Caco-2 (cell line): ENCODE measurements at regions of chr2 and their contacts with region 1.

Region 1: GRCh38 chr2:150487537-150488429 is at the start of gene RND3:
- DNase-seq: peak; percentile 97 to 98
- H3K4me3 ChIP-seq: peak within 1 kb of the TSS; percentile 81
- H3K4me3 Mint-ChIP-seq: peak within 1 kb of the TSS; percentile 99
- H3K27ac Mint-ChIP-seq: peak within 1 kb of the TSS; percentile 93
- H3K4me1 ChIP-seq: peaks cover 22% of the 10 kb centered on the region
- H3K4me1 Mint-ChIP-seq: peaks cover 12% of the 10 kb centered on the region
- H3K27me3 ChIP-seq: no peaks in the 10 kb centered on the region
- H3K27me3 Mint-ChIP-seq: no peaks in the 10 kb centered on the region
- CTCF ChIP-seq: peak; percentile 83 to 85
- total RNA-seq, gene RND3: 70.9 and 75.0 TPM in 2 replicates

Region 2: GRCh38 chr2:149715005-149715592 is 772.7 kb before region 1 on chr2:
- CTCF ChIA-PET with region 1: no interaction called
- POLR2A ChIA-PET with region 1: no interaction called
- intact Hi-C with region 1: loop called (anchors 1 kb)
- DNase-seq: peak; percentile 40 to 47
- H3K4me3 ChIP-seq: no peak overlapping the region
- H3K4me3 Mint-ChIP-seq: no peak overlapping the region
- H3K27ac Mint-ChIP-seq: no peak overlapping the region
- H3K4me1 ChIP-seq: no peaks in the 10 kb centered on the region
- H3K4me1 Mint-ChIP-seq: no peaks in the 10 kb centered on the region
- H3K27me3 ChIP-seq: no peaks in the 10 kb centered on the region
- H3K27me3 Mint-ChIP-seq: no peaks in the 10 kb centered on the region
- CTCF ChIP-seq: peak; percentile 75 to 81

Region 3: DNA sequence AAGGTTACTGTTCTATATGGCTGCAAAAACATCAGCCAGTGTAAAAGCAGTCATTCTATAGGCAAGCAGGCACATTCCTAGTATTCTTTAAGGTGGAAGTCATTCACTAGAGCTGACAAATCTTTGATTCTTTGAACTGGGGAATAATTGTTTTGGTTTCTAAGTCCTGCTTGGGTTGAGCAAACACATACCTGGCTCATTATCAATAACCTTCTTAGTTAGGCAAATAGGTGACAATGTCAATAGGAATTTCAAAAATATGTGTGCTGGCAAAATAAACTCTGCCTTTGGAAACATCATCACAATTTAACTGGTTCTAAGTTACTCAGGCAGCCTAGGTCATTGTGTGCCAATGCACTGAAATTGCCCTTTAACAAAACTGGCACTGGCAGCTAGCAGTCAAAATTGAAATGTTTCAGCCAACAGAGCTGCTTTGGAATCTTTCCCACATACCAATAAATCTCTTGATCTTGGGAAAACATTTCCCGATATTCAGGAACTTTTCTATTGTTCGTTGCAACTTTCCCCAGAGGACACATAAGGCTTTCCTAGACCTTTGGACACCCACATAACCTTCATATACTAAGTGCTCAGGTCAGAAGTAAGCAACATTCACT is 498.2 kb before region 1 on chr2:
- CTCF ChIA-PET with region 1: no interaction called
- POLR2A ChIA-PET with region 1: no interaction called
- intact Hi-C with region 1: loop called (anchors 10 kb)
- DNase-seq: peak in 1 of 2 experiments; percentile 50
- H3K4me3 ChIP-seq: no peak overlapping the region
- H3K4me3 Mint-ChIP-seq: peak overlapping the region; percentile 42
- H3K27ac Mint-ChIP-seq: peak overlapping the region; percentile 87
- H3K4me1 ChIP-seq: peaks cover 47% of the 10 kb centered on the region
- H3K4me1 Mint-ChIP-seq: peaks cover 51% of the 10 kb centered on the region
- H3K27me3 ChIP-seq: no peaks in the 10 kb centered on the region
- H3K27me3 Mint-ChIP-seq: no peaks in the 10 kb centered on the region
- CTCF ChIP-seq: no peak

Region 4: GRCh38 chr2:150133623-150134022 is 354.2 kb before region 1 on chr2:
- CTCF ChIA-PET with region 1: no interaction called
- POLR2A ChIA-PET with region 1: no interaction called
- intact Hi-C with region 1: loop called (anchors 1 kb)
- DNase-seq: peak; percentile 55 to 58
- H3K4me3 ChIP-seq: no peak overlapping the region
- H3K4me3 Mint-ChIP-seq: no peak overlapping the region
- H3K27ac Mint-ChIP-seq: no peak overlapping the region
- H3K4me1 ChIP-seq: peaks cover 43% of the 10 kb centered on the region
- H3K4me1 Mint-ChIP-seq: peaks cover 34% of the 10 kb centered on the region
- H3K27me3 ChIP-seq: no peaks in the 10 kb centered on the region
- H3K27me3 Mint-ChIP-seq: no peaks in the 10 kb centered on the region
- CTCF ChIP-seq: no peak

Region 5: GRCh38 chr2:150309311-150310032 is 178.3 kb before region 1 on chr2:
- CTCF ChIA-PET with region 1: no interaction called
- POLR2A ChIA-PET with region 1: no interaction called
- intact Hi-C with region 1: loop called (anchors 2 kb)
- DNase-seq: peak; percentile 67 to 83
- H3K4me3 ChIP-seq: no peak overlapping the region
- H3K4me3 Mint-ChIP-seq: peak overlapping the region; percentile 0
- H3K27ac Mint-ChIP-seq: peak overlapping the region; percentile 66
- H3K4me1 ChIP-seq: peaks cover 31% of the 10 kb centered on the region
- H3K4me1 Mint-ChIP-seq: peaks cover 34% of the 10 kb centered on the region
- H3K27me3 ChIP-seq: no peaks in the 10 kb centered on the region
- H3K27me3 Mint-ChIP-seq: no peaks in the 10 kb centered on the region
- CTCF ChIP-seq: no peak

Region 6: DNA sequence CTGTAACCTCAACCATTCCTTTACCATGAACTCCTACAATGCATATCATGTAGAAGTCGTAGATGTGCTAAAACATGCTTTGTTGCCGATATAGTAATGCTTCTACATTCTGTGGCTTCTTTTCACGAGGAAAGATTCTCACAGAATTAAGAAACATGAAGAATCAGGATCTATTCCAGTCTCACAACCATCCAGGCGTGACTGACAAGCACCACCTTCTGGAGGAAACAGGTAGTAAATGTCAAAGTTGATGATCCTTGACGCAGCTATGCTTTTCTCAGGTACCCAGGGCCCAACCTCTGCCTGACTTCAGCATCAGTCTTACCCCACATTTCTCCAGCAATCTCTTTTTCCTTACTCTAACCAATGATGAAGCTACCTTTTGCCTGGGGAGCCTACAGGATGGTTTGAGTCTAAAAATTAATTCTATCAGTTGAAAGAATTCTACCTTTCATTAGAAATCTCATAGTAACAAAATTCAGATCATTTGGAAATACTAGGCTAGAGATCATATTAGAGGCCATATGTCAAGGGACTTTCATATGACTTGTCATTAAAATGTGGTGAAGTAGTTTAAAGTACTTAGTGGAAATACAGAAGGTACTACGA is 123.0 kb after region 1 on chr2:
- CTCF ChIA-PET with region 1: no interaction called
- POLR2A ChIA-PET with region 1: no interaction called
- intact Hi-C with region 1: loop called (anchors 1 kb)
- DNase-seq: peak; percentile 59 to 77
- H3K4me3 ChIP-seq: no peak overlapping the region
- H3K4me3 Mint-ChIP-seq: no peak overlapping the region
- H3K27ac Mint-ChIP-seq: no peak overlapping the region
- H3K4me1 ChIP-seq: peaks cover 16% of the 10 kb centered on the region
- H3K4me1 Mint-ChIP-seq: peaks cover 13% of the 10 kb centered on the region
- H3K27me3 ChIP-seq: no peaks in the 10 kb centered on the region
- H3K27me3 Mint-ChIP-seq: no peaks in the 10 kb centered on the region
- CTCF ChIP-seq: peak; percentile 76 to 85